ENCODE measurements at regions of chr1 and their contacts with region 1.

Region 1: DNA sequence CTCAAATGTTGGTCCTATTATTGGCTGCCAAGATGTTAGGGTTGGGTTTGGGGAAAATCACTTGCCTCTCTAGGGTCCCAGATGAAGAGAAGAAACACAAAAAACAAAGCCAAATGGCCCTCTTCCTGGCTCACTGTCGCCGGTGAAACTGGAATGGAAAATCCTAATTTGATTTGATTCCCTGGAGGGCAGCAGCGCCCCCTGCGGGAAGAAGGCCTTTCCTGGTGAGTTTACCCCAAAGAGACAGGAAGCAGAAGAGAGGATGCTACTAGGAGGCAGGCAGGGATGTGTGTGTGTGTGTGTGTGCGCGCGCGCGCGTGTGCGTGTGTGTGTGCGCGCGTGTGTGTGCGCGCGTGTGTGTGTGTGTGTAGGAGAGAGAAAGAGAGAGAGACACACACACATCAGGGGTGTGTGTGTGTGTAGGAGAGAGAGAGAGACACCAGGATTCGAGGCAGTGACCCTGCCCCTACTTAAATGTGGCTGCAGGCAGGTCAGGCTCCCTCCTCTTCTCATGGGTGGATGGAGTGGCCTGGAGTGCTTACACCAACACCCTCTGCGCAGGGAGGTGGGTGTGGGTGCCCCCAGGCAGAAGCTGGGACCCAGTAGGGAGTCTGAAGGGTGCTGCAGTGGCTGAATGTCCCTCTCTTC is 3.1 kb upstream of the SELENON start:
- DNase-seq: peak; percentile 67
- ATAC-seq: peak; percentile 65
- H3K4me3 ChIP-seq: no peak overlapping the region
- H3K27ac ChIP-seq: no peak overlapping the region
- H3K4me1 ChIP-seq: peaks cover 5 to 16% of the 10 kb centered on the region in 2 experiments; a peak in 3 of 4 replicates
- H3K27me3 ChIP-seq: no peaks in the 10 kb centered on the region
- CTCF ChIP-seq: peak; percentile 80 to 88 (median 83)
- POLR2A ChIP-seq: no peak
- RAD21 ChIP-seq: peak; percentile 89

Region 2: DNA sequence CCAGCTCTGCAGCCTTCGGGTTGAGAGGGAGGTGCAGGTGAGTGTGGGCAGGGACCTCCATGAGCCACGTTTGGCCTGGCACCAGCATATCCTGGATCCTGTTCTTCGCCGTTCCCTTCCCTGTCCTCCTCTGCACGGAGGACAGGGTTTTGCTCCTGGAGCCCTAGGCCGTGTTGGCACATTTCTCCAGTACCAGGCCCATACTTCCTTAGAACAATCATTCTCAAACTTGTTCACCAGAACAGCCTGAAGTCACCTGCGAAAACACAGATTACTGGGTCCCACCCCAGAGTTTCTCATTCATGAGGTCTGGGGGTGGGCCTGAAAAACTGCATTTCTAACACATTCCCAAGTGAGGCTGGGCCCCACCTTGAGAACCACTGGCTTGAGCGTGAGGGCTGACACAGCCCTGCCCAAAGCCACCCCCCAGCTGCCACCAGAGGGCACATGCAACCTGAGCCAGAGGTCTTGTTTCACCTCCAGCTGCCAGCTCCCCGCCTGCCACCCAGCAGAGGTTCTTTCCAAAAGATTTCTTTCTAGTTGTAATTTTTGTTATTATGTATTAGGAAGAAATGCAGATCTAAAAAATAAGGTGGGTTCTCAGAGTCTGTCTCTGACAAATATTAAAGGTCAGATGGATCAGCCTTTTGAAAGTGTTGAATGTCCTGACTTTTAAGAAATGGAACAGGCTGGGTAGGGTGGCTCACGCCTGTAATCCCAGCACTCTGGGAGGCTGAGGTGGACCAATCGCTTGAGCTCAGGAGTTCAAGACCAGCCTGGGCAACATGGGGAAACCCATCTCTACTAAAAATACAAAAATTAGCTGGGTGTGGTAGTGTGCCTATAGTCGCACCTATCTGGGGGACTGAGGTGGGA is 293.1 kb before region 1 on chr1:
- CTCF ChIA-PET with region 1: interaction called, 12 read pairs
- POLR2A ChIA-PET with region 1: no interaction called
- RAD21 ChIA-PET with region 1: interaction called in 1 of 2 experiments, 3 read pairs
- intact Hi-C with region 1: loop called (anchors 5 kb)
- DNase-seq: peak; percentile 39
- ATAC-seq: peak; percentile 98
- H3K4me3 ChIP-seq: no peak overlapping the region
- H3K27ac ChIP-seq: no peak overlapping the region
- H3K4me1 ChIP-seq: peaks cover 10 to 18% of the 10 kb centered on the region in 2 experiments
- H3K27me3 ChIP-seq: no peaks in the 10 kb centered on the region
- CTCF ChIP-seq: peak; percentile 77 to 89 (median 87)
- POLR2A ChIP-seq: no peak
- RAD21 ChIP-seq: peak; percentile 93

Region 3: GRCh38 chr1:25532970-25533369 is 264.0 kb before region 1 on chr1:
- CTCF ChIA-PET with region 1: no interaction called
- POLR2A ChIA-PET with region 1: no interaction called
- RAD21 ChIA-PET with region 1: no interaction called
- intact Hi-C with region 1: loop called (anchors 2 kb)
- DNase-seq: no peak
- ATAC-seq: no peak
- H3K4me3 ChIP-seq: no peak overlapping the region
- H3K27ac ChIP-seq: no peak overlapping the region
- H3K4me1 ChIP-seq: peaks cover 0 to 1% of the 10 kb centered on the region in 2 experiments; a peak in 1 of 4 replicates
- H3K27me3 ChIP-seq: no peaks in the 10 kb centered on the region
- CTCF ChIP-seq: 0 out of 6 replicates have a peak, but pooled peaks of 2 of the 3 experiments have one; percentile 11 to 37
- POLR2A ChIP-seq: no peak
- RAD21 ChIP-seq: peak; percentile 63

Region 4: DNA sequence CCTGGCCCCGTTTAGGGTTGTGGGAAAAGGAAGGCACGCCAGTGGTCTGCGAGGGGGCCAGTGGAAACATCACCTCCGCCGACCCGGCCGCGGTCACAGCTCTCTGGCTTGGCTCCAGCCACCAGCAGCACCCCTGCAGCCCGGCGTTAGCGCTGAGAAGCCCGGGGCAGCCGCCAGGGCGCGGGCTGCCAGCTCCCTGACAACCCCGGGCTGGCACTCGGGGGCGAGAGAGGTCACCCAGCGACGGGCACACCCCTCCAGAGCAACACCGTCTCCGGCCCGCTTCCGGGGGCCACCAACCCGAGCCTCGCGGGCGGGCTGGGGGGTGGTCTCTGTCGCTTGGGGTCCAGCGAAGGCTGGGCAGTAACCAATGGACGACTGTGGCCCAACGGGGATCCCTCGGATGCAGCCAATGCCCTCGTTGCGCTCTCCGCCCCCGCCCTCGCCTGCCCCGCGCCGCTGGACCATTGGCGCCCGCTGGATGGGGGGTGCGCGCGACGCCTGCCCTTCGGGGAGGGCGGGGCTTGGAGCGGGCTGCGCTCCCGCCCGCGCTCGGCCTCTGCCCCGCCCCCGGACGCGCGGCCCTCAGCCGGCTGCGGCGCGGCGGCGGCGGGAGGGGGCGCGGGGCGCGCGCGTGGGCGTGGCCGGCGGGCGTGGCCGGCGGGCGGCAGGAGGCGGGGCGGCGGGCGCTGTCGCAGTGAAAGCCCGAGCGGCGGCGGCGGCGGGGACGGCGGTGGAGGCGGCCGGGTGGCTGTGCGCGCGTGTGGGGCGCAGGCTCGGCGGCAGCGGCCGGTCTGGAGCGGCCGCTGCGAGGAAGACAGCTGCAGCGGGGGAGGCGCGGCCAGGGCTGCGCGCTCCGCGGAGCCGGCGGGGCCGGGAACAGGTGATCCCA is 180.6 kb before region 1 on chr1 and contains the start of gene MAN1C1:
- CTCF ChIA-PET with region 1: interaction called, 8 read pairs
- POLR2A ChIA-PET with region 1: no interaction called
- RAD21 ChIA-PET with region 1: no interaction called
- intact Hi-C with region 1: loop called (anchors 5 kb)
- DNase-seq: peak; percentile 69
- ATAC-seq: peak; percentile 95
- H3K4me3 ChIP-seq: peak within 1 kb of the TSS; percentile 64 to 72
- H3K27ac ChIP-seq: peak within 1 kb of the TSS; percentile 55; the same call in 1 of the 2 replicates
- H3K4me1 ChIP-seq: peaks cover 5 to 13% of the 10 kb centered on the region in 2 experiments; a peak in 3 of 4 replicates
- H3K27me3 ChIP-seq: peaks cover 13% of the 10 kb centered on the region; the same call in 1 of the 2 replicates
- CTCF ChIP-seq: peak in 2 of 3 experiments; percentile 50; a peak in 4 of 6 replicates
- POLR2A ChIP-seq: no peak
- RAD21 ChIP-seq: no peak
- total RNA-seq, gene MAN1C1: 1.2 TPM

Region 5: GRCh38 chr1:26321315-26322041 is 524.5 kb after region 1 on chr1:
- CTCF ChIA-PET with region 1: no interaction called
- POLR2A ChIA-PET with region 1: no interaction called
- RAD21 ChIA-PET with region 1: no interaction called
- intact Hi-C with region 1: no loop called
- DNase-seq: peak; percentile 54
- ATAC-seq: peak; percentile 97
- H3K4me3 ChIP-seq: no peak overlapping the region
- H3K27ac ChIP-seq: no peak overlapping the region
- H3K4me1 ChIP-seq: peaks cover 5 to 16% of the 10 kb centered on the region in 2 experiments; a peak in 3 of 4 replicates
- H3K27me3 ChIP-seq: no peaks in the 10 kb centered on the region
- CTCF ChIP-seq: peak; percentile 83 to 93 (median 92)
- POLR2A ChIP-seq: no peak
- RAD21 ChIP-seq: peak; percentile 97

Region 6: DNA sequence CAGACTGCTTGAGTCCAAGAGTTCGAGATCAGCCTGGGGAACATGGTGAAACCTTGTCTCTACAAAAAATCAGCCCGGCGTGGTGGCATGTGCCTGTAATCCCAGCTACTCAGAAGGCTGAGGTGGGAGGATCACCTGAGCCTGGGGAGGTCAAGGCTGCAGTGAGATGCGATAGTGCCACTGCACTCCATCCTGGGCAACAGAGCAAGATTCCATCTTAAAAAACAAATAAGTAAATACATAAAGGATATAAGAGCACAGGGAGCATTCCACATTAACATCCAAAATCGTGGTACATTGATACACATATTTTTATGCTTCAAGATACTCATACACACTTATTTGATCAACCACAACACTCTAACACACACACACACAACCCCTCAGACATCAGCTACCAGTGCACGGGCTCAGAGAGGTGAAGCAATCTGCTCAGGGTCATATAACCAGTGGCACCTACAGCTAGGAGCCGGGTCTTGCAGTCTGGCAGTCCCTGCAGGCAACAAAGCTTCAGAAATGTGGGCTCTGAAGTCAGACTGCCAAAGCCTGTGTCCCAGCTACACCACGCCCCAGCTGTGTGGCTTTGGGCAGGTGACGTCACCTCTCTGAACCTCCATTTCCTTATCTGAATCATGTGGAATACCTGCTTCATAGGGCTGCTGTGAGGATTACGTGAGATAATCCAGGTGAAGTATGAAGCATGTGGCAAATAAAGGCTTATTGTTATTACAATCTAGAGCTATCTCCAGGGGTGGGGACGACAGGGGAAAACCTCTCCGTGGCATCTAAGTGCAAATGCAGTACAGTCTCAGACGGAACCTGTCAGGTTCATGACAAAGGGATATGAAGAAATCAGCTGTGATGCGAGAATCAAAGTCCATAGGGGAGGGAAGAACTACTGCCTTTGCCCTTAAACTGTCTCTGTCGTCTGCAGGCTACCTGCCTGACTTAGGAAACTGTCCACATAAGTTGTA is 561.8 kb after region 1 on chr1:
- CTCF ChIA-PET with region 1: no interaction called
- POLR2A ChIA-PET with region 1: no interaction called
- RAD21 ChIA-PET with region 1: no interaction called
- intact Hi-C with region 1: no loop called
- DNase-seq: peak; percentile 51
- ATAC-seq: peak; percentile 41
- H3K4me3 ChIP-seq: peak overlapping the region in 1 of 2 experiments; percentile 16; a peak in 2 of 4 replicates
- H3K27ac ChIP-seq: no peak overlapping the region
- H3K4me1 ChIP-seq: peaks cover 29 to 57% of the 10 kb centered on the region in 2 experiments
- H3K27me3 ChIP-seq: no peaks in the 10 kb centered on the region
- CTCF ChIP-seq: no peak
- POLR2A ChIP-seq: no peak
- RAD21 ChIP-seq: no peak

Measured in HCT116 (cell line).